ENCODE measurements at regions of chr11 and their contacts with region 1.

Region 1: DNA sequence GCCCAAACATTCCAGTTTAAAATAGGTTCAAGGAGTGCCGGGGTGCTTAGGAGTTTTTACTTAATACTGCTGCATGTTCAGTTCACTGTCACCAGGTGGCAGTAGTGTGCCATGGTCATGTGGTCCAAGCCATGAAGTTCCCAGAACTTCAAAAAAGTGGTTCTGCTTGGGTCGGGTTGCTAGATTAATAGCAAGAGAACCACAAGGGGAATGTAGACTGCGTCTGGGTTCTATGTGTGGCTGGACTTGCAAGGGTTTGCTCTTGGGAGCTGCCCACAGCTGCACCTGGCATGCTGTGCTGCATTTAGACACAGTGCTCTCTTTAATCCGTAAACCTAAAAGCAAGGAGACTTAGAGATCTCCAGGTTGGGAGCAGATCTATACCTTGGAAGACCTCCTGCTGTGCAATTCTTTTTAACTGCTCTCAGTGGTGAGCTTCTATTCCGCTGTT is 6.5 kb upstream of the SPON1 start:
- DNase-seq: peak; percentile 26
- H3K4me3 ChIP-seq: no peak overlapping the region
- H3K27ac ChIP-seq: no peak overlapping the region
- H3K27me3 ChIP-seq: peaks cover 32% of the 10 kb centered on the region
- CTCF ChIP-seq: peak; percentile 92

Region 2: DNA sequence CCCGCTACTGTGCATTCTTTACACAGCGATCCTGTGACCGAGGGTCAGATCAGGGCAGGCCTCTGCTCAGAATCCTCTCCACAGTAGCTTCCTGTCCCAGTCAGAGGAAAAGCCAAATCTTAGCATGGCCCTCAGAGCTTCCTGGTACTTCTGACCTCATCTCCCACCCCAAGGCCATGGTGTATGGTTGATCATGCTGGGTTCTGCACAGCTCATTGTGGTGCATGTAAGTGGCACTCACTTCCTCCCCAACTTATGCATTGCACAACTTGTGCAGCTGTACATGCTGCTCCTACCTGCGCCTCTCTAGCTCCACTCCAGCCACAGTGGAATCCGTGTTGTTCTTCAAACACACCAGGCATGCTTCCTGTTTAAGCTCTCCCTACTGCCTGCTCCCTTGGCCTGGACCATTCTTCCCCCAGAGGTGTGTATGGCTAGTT is 658.1 kb before region 1 on chr11:
- CTCF ChIA-PET with region 1: no interaction called
- POLR2A ChIA-PET with region 1: no interaction called
- DNase-seq: no peak
- H3K4me3 ChIP-seq: no peak overlapping the region
- H3K27ac ChIP-seq: no peak overlapping the region
- H3K27me3 ChIP-seq: no peaks in the 10 kb centered on the region
- CTCF ChIP-seq: no peak

Region 3: GRCh38 chr11:13772223-13773046 is 183.6 kb before region 1 on chr11:
- CTCF ChIA-PET with region 1: interaction called, 10 read pairs
- POLR2A ChIA-PET with region 1: no interaction called
- DNase-seq: peak; percentile 10
- H3K4me3 ChIP-seq: no peak overlapping the region
- H3K27ac ChIP-seq: no peak overlapping the region
- H3K27me3 ChIP-seq: peaks cover 4% of the 10 kb centered on the region
- CTCF ChIP-seq: peak; percentile 46

Region 4: GRCh38 chr11:13970986-13971385 is 15.0 kb after region 1 on chr11:
- CTCF ChIA-PET with region 1: interaction called, 37 read pairs
- POLR2A ChIA-PET with region 1: no interaction called
- DNase-seq: no peak
- H3K4me3 ChIP-seq: no peak overlapping the region
- H3K27ac ChIP-seq: no peak overlapping the region
- H3K27me3 ChIP-seq: peaks cover 24% of the 10 kb centered on the region
- CTCF ChIP-seq: peak; percentile 45

Region 5: GRCh38 chr11:14249121-14249963 is 293.3 kb after region 1 on chr11:
- CTCF ChIA-PET with region 1: interaction called, 58 read pairs
- POLR2A ChIA-PET with region 1: no interaction called
- DNase-seq: peak; percentile 15
- H3K4me3 ChIP-seq: no peak overlapping the region
- H3K27ac ChIP-seq: no peak overlapping the region
- H3K27me3 ChIP-seq: peaks cover 44% of the 10 kb centered on the region
- CTCF ChIP-seq: peak; percentile 87

Measured in AG04450 (cell line).